ENCODE measurements at regions of chr9 and their contacts with region 1.

Region 1: DNA sequence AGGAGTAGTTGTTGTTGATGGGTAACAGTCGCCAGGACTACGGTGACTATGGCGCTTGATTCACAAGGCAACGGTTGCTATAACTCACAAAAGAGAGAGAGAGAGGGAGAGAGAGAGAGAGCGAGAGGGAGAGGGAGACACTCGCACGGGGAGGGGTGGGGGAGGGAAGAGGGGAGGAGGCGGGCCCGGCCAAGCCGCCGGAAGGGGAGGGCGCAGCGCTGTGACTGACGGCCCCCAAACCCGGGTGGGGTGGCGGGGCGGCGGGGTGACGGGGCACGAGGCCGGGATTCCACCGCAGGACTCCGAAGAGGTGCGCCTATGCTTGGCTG is at the start of gene RFX3:
- DNase-seq: peak; percentile 90
- H3K4me3 ChIP-seq: peak within 1 kb of the TSS; percentile 63 to 94 (median 79)
- H3K27ac ChIP-seq: peak within 1 kb of the TSS; percentile 98
- H3K4me1 ChIP-seq: peaks cover 16% of the 10 kb centered on the region
- H3K27me3 ChIP-seq: no peaks in the 10 kb centered on the region
- CTCF ChIP-seq: no peak
- POLR2A ChIP-seq: no peak
- total RNA-seq, gene RFX3: 10.5 and 13.7 TPM in 2 replicates

Region 2: GRCh38 chr9:2857564-2858198 is 668.1 kb before region 1 on chr9:
- CTCF ChIA-PET with region 1: no interaction called
- POLR2A ChIA-PET with region 1: no interaction called
- dilution Hi-C with region 1: no loop called
- intact Hi-C with region 1: loop called (anchors 5 kb)
- DNase-seq: peak; percentile 67
- H3K4me3 ChIP-seq: no peak overlapping the region
- H3K27ac ChIP-seq: no peak overlapping the region
- H3K4me1 ChIP-seq: no peaks in the 10 kb centered on the region
- H3K27me3 ChIP-seq: peaks cover 5 to 14% of the 10 kb centered on the region in 2 experiments
- CTCF ChIP-seq: peak; percentile 75 to 76
- POLR2A ChIP-seq: no peak

Region 3: GRCh38 chr9:3323714-3324113 is 202.1 kb before region 1 on chr9:
- CTCF ChIA-PET with region 1: no interaction called
- POLR2A ChIA-PET with region 1: no interaction called
- dilution Hi-C with region 1: no loop called
- intact Hi-C with region 1: loop called (anchors 2 kb)
- DNase-seq: peak; percentile 38
- H3K4me3 ChIP-seq: no peak overlapping the region
- H3K27ac ChIP-seq: no peak overlapping the region
- H3K4me1 ChIP-seq: peaks cover 33% of the 10 kb centered on the region
- H3K27me3 ChIP-seq: no peaks in the 10 kb centered on the region
- CTCF ChIP-seq: no peak
- POLR2A ChIP-seq: no peak

Region 4: GRCh38 chr9:3447788-3448187 is 78.0 kb before region 1 on chr9:
- CTCF ChIA-PET with region 1: no interaction called
- POLR2A ChIA-PET with region 1: no interaction called
- dilution Hi-C with region 1: no loop called
- intact Hi-C with region 1: no loop called
- DNase-seq: no peak
- H3K4me3 ChIP-seq: no peak overlapping the region
- H3K27ac ChIP-seq: no peak overlapping the region
- H3K4me1 ChIP-seq: no peaks in the 10 kb centered on the region
- H3K27me3 ChIP-seq: no peaks in the 10 kb centered on the region
- CTCF ChIP-seq: no peak
- POLR2A ChIP-seq: no peak

Region 5: DNA sequence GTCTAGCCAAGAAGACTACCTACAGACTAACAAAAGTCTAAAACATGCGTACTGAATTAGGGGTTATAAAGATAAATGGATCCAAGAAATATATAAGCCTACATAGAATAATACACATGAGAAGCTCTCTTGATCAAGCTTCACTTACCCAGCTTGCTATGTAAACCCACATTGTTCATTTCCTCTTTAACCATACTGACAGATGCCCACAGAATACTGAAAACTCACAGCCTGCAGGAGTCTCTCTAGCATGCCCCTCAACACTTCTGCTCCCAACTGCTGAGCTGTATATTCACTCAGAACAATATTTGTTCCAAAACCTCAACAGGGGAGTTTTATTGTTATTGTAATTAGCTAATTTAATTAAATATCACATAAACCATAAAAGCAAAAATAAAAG is 52.4 kb before region 1 on chr9:
- CTCF ChIA-PET with region 1: interaction called, 15 read pairs
- POLR2A ChIA-PET with region 1: interaction called, 12 read pairs
- dilution Hi-C with region 1: no loop called
- intact Hi-C with region 1: loop called (anchors 1 kb)
- DNase-seq: peak; percentile 24
- H3K4me3 ChIP-seq: no peak overlapping the region
- H3K27ac ChIP-seq: no peak overlapping the region
- H3K4me1 ChIP-seq: peaks cover 58% of the 10 kb centered on the region
- H3K27me3 ChIP-seq: no peaks in the 10 kb centered on the region
- CTCF ChIP-seq: no peak
- POLR2A ChIP-seq: no peak

Region 6: GRCh38 chr9:3498691-3499090 is 27.1 kb before region 1 on chr9:
- CTCF ChIA-PET with region 1: no interaction called
- POLR2A ChIA-PET with region 1: interaction called, 5 read pairs
- dilution Hi-C with region 1: no loop called
- intact Hi-C with region 1: loop called (anchors 1 kb)
- DNase-seq: no peak
- H3K4me3 ChIP-seq: no peak overlapping the region
- H3K27ac ChIP-seq: no peak overlapping the region
- H3K4me1 ChIP-seq: peaks cover 22% of the 10 kb centered on the region
- H3K27me3 ChIP-seq: no peaks in the 10 kb centered on the region
- CTCF ChIP-seq: no peak
- POLR2A ChIP-seq: no peak

Region 7: DNA sequence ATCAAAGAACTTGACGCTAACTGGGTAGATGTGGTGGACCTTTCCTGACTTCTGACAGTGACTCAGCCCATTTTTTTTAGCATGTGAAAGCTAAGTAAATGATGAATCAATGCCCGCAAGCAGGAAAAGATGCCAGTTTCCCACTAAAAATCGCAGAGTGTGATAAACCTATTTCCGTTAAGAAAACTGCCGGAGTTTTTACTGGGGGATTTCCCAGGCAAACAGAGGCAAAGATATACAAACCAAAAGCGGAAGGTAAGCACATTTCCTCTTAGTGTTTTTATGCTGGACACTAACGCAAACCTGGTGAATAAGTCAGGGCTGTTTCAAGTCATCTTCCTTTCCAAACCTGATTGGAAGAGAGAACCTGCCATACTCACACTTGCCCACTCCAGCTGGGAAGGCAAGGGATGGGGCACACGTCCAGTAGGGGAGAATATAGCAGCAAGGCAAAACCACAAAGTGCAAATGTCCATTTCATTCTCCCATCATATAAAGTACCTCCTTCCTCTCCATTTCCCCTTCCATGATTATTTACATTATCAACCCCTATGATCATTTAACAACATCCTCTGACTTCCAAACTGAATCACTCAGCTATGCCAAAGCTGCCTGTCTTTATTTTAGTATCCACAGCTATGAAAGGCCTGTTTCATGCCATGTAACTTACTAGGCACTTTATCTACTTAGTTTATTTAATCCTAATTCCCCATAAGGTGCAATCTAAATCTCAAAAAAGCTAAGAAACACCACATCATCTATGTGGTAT is 349.7 kb after region 1 on chr9:
- CTCF ChIA-PET with region 1: no interaction called
- POLR2A ChIA-PET with region 1: no interaction called
- dilution Hi-C with region 1: no loop called
- intact Hi-C with region 1: loop called (anchors 2 kb)
- DNase-seq: peak; percentile 92
- H3K4me3 ChIP-seq: no peak overlapping the region
- H3K27ac ChIP-seq: peak overlapping the region; percentile 56
- H3K4me1 ChIP-seq: peaks cover 23% of the 10 kb centered on the region
- H3K27me3 ChIP-seq: peaks cover 14 to 19% of the 10 kb centered on the region in 2 experiments
- CTCF ChIP-seq: no peak
- POLR2A ChIP-seq: peak; percentile 38